ENCODE measurements at regions of chr7 and their contacts with region 1.

Region 1: DNA sequence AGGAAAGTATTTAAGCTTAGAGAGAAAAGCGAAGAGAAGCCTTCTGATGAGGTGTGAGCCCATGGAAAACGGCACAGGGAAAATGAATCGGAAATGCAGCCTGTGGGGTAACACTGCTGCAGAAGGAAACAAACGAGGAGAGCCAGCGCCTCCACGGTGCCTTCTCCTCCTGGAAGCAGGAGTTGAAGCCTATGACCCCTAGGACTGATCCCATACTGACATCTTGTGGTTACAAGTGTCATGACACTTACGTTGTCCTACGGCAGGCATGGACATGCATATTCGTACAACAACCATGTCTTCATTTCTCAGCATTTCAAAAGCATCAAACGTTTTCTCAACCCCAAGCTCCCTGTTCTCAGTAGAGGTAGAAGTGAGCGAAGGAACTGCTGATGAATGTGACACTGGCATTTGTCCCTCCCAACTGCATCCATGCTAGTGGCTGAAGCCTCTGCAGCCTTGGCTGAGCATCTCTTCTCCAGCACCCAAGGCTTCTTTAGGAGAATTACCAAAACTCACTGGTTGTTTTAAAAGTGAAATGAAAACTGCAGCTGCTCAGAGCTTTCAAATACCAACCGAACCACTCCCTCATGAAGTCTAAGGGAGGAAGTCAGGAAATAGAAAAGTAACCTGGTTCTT is 160.2 kb downstream of the JAZF1 start:
- DNase-seq: peak; percentile 40
- ATAC-seq: peak; percentile 91
- H3K4me3 Mint-ChIP-seq: no peak overlapping the region
- H3K27ac Mint-ChIP-seq: no peak overlapping the region
- H3K4me1 Mint-ChIP-seq: peaks cover 8% of the 10 kb centered on the region
- H3K27me3 Mint-ChIP-seq: no peaks in the 10 kb centered on the region
- CTCF ChIP-seq: peak; percentile 76

Region 2: GRCh38 chr7:28032738-28033380 is 12.4 kb after region 1 on chr7:
- CTCF ChIA-PET with region 1: interaction called, 10 read pairs
- POLR2A ChIA-PET with region 1: no interaction called
- intact Hi-C with region 1: no loop called
- DNase-seq: no peak
- ATAC-seq: no peak
- H3K4me3 Mint-ChIP-seq: no peak overlapping the region
- H3K27ac Mint-ChIP-seq: no peak overlapping the region
- H3K4me1 Mint-ChIP-seq: peaks cover 22% of the 10 kb centered on the region
- H3K27me3 Mint-ChIP-seq: no peaks in the 10 kb centered on the region
- CTCF ChIP-seq: no peak